ENCODE measurements at regions of chr6 and their contacts with region 1.

Region 1: GRCh38 chr6:163419413-163420288 is 5.1 kb downstream of the QKI start:
- DNase-seq: no peak
- ATAC-seq: no peak
- H3K4me3 ChIP-seq: peak overlapping the region; percentile 1 to 95 (median 83)
- H3K27ac ChIP-seq: peak overlapping the region; percentile 81 to 100 (median 98)
- H3K4me1 ChIP-seq: peaks cover 13 to 78% (median 47%) of the 10 kb centered on the region in 12 donors
- H3K27me3 ChIP-seq: no peaks in the 10 kb centered on the region
- CTCF ChIP-seq: peak in 1 of 12 donors; percentile 10
- POLR2A ChIP-seq: no peak

Region 2: GRCh38 chr6:163398815-163399214 is 20.8 kb before region 1 on chr6:
- intact Hi-C with region 1: no loop called
- DNase-seq: peak in 4 of 5 donors; percentile 32 to 65 (median 48)
- ATAC-seq: peak in 3 of 4 donors; percentile 31 to 62 (median 48)
- H3K4me3 ChIP-seq: no peak overlapping the region
- H3K27ac ChIP-seq: peak overlapping the region in 1 of 12 donors; percentile 62
- H3K4me1 ChIP-seq: peaks cover 0 to 46% (median 5%) of the 10 kb centered on the region in 12 donors
- H3K27me3 ChIP-seq: no peaks in the 10 kb centered on the region
- CTCF ChIP-seq: no peak
- POLR2A ChIP-seq: no peak

Region 3: GRCh38 chr6:163565140-163565539 is 145.5 kb after region 1 on chr6:
- intact Hi-C with region 1: loop called in 4 of 10 experiments (anchors 5 to 10 kb)
- DNase-seq: no peak
- ATAC-seq: peak in 3 of 4 donors; percentile 45 to 69 (median 64)
- H3K4me3 ChIP-seq: no peak overlapping the region
- H3K27ac ChIP-seq: peak overlapping the region in 4 of 12 donors; percentile 5 to 21 (median 8)
- H3K4me1 ChIP-seq: peaks cover 0 to 70% (median 37%) of the 10 kb centered on the region in 12 donors
- H3K27me3 ChIP-seq: no peaks in the 10 kb centered on the region
- CTCF ChIP-seq: no peak
- POLR2A ChIP-seq: no peak